ENCODE measurements at regions of chrX and their contacts with region 1.

Region 1: DNA sequence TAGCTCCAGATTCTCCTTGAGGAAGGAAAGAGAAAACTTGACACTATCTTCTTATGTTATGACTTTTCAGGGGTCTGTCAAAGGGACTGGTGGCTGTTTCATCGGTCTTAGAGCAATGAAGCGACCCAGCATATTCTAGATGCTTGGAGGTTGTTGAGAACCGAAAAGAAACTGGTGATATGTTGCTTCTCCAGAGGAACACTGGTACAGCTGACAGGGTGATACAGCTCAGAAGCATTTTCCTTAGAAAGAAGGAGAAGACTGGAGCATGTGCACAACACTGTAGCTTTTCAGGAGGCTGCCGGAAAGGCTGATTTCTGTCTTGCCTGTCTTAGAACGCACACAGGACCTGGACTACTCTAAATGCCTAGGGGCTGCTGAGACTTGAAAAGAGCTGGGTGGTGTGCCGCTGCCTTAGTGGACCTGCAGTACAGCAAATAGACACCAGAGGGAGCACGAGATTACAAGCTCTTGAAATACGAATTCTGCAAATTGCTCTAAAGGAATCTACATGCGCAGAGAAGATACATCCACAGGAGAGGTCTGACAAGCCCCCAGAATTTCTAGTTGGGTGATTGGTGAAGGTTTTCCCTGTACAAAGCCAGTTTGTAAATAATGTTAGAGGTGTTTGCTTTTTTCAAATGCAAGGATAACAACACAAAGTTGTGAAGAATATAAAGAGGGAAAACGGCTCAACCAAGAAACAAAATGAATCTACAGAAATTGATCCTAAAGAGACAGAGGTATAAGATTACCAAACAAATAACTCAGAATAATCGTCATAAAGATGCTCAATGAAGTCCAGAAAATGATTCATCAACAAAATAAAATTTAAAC is 223.1 kb upstream of the DMD start:
- DNase-seq: peak; percentile 59
- H3K4me3 ChIP-seq: no peak overlapping the region
- H3K27ac ChIP-seq: no peak overlapping the region
- H3K4me1 ChIP-seq: no peaks in the 10 kb centered on the region
- H3K27me3 ChIP-seq: no peaks in the 10 kb centered on the region
- CTCF ChIP-seq: peak; percentile 56 to 63
- POLR2A ChIP-seq: no peak

Region 2: DNA sequence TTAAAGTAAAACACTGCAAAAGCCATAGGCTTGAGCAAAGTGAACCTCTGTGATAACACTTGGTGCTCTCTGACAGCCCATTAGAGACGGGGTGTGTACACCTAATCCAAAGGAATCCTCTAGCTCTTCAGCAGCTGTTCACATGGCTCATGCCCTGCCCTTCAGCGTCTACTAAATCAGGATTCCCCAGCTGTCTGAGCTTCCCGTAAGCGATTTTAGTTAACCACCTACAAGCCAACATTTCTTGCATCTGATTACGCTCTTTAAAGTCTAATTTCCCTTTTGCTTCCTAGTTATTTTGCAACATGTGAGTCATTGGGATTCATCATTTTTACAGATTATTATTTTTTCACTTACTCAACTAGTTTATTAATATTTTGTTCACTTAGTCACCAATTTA is 229.6 kb before region 1 on chrX:
- CTCF ChIA-PET with region 1: no interaction called
- POLR2A ChIA-PET with region 1: no interaction called
- dilution Hi-C with region 1: no loop called
- intact Hi-C with region 1: no loop called
- DNase-seq: no peak
- H3K4me3 ChIP-seq: no peak overlapping the region
- H3K27ac ChIP-seq: no peak overlapping the region
- H3K4me1 ChIP-seq: peaks cover 2% of the 10 kb centered on the region
- H3K27me3 ChIP-seq: no peaks in the 10 kb centered on the region
- CTCF ChIP-seq: no peak
- POLR2A ChIP-seq: no peak

Region 3: DNA sequence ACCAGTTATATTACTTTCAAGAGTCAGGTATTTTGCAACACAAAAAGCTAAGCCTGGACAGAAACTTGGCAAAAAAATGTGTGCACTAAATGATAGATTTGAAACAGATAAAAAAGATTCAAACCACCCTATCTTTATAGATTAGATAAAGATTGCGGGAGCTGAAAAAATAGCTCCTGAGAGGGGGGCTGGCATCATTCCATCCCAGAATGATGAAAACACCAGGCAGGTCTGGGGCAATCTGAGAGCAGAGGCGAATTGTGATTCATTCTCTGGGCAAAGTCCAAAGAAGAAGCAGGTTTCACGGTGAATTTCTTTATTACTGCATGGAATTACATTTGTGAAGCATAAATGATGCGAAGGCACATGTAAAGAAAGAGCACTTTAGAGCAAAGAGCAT is 54.6 kb before region 1 on chrX:
- CTCF ChIA-PET with region 1: no interaction called
- POLR2A ChIA-PET with region 1: no interaction called
- dilution Hi-C with region 1: no loop called
- intact Hi-C with region 1: no loop called
- DNase-seq: no peak
- H3K4me3 ChIP-seq: no peak overlapping the region
- H3K27ac ChIP-seq: no peak overlapping the region
- H3K4me1 ChIP-seq: no peaks in the 10 kb centered on the region
- H3K27me3 ChIP-seq: no peaks in the 10 kb centered on the region
- CTCF ChIP-seq: no peak
- POLR2A ChIP-seq: no peak

Region 4: GRCh38 chrX:34275699-34276098 is 841.2 kb after region 1 on chrX:
- CTCF ChIA-PET with region 1: interaction called, 72 read pairs
- POLR2A ChIA-PET with region 1: no interaction called
- dilution Hi-C with region 1: no loop called
- intact Hi-C with region 1: no loop called
- DNase-seq: peak; percentile 2
- H3K4me3 ChIP-seq: no peak overlapping the region
- H3K27ac ChIP-seq: no peak overlapping the region
- H3K4me1 ChIP-seq: no peaks in the 10 kb centered on the region
- H3K27me3 ChIP-seq: no peaks in the 10 kb centered on the region
- CTCF ChIP-seq: no peak
- POLR2A ChIP-seq: no peak

Region 5: DNA sequence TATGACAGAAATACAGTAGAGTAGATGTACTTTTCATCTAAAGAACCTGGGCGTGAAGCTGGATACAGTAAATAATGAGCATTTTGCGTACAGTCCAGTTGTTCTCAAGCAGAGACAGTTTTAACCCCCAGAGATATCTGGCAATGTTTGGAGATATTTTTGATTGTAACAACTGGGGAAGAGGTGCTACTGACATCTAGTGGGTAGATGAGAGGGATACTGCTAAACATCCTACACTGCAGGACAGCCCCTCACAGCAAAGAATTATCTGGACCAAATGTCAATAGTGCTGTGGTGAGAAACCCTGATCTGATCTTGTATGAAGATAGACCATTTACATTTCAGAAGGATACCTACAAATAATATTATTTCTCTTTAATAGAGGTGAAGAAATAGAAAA is 897.9 kb after region 1 on chrX:
- CTCF ChIA-PET with region 1: interaction called, 21 read pairs
- POLR2A ChIA-PET with region 1: no interaction called
- dilution Hi-C with region 1: no loop called
- intact Hi-C with region 1: no loop called
- DNase-seq: no peak
- H3K4me3 ChIP-seq: no peak overlapping the region
- H3K27ac ChIP-seq: no peak overlapping the region
- H3K4me1 ChIP-seq: no peaks in the 10 kb centered on the region
- H3K27me3 ChIP-seq: no peaks in the 10 kb centered on the region
- CTCF ChIP-seq: peak; percentile 10 to 27
- POLR2A ChIP-seq: no peak

Region 6: GRCh38 chrX:34341258-34341657 is 906.8 kb after region 1 on chrX:
- CTCF ChIA-PET with region 1: interaction called, 50 read pairs
- POLR2A ChIA-PET with region 1: no interaction called
- dilution Hi-C with region 1: no loop called
- intact Hi-C with region 1: no loop called
- DNase-seq: peak; percentile 21
- H3K4me3 ChIP-seq: no peak overlapping the region
- H3K27ac ChIP-seq: no peak overlapping the region
- H3K4me1 ChIP-seq: no peaks in the 10 kb centered on the region
- H3K27me3 ChIP-seq: no peaks in the 10 kb centered on the region
- CTCF ChIP-seq: peak in 1 of 2 donors; percentile 14
- POLR2A ChIP-seq: no peak